Activated CD4-positive, alpha-beta memory T cell treated with anti-CD3 and anti-CD28 coated beads for 36 hours (primary cell): ENCODE measurements at regions of chr2 and their contacts with region 1.

Region 1: GRCh38 chr2:144357623-144358373 is 162.1 kb downstream of the ZEB2 start:
- DNase-seq: peak; percentile 61
- H3K4me3 Mint-ChIP-seq: peak overlapping the region; percentile 12
- H3K27ac Mint-ChIP-seq: peak overlapping the region; percentile 88
- H3K4me1 Mint-ChIP-seq: peaks cover 26% of the 10 kb centered on the region
- H3K27me3 Mint-ChIP-seq: no peaks in the 10 kb centered on the region

Region 2: DNA sequence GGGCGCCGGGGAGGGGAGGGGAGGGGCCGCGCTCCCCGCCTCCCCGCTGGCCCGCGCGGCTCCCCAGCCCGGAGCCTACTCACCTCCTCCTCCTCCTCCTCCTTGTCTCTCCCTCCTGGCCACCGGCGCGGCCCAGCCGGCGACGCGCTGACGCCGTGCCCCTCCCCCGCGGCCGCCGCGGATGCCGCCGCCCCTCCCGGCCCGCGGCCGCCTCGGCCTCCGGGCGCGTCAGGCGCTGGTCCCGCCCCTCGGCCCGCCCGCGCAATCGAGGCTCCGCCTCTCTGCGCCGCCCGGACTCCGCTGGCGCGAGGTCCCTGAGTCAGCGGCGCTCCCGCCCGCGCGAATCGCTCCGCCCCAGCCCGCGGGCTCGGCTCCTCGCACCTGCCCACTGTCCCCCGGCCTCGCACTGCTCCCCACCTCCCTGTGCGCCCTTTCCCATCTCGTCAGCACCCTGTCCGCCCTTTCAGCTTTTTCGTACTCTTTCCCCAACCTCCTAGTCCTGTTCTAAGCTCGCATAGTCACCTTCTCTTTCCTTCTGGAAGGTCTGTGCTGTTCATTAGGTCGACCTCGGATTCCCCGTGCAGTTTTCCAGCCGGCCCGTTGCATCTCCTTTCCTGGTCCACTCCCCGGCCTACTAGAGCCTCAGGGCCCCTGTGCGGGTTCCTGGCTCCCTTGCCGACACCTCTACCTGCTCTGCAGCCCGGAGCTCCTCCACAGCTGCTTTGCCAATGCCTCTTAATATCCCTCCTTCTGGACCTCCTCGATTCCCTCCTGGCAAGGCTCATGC is 25.2 kb before region 1 on chr2:
- CTCF ChIA-PET with region 1: no interaction called
- POLR2A ChIA-PET with region 1: interaction called, 5 read pairs
- intact Hi-C with region 1: loop called (anchors 1 kb)
- DNase-seq: peak; percentile 92
- H3K4me3 Mint-ChIP-seq: peak overlapping the region; percentile 91
- H3K27ac Mint-ChIP-seq: peak overlapping the region; percentile 96
- H3K4me1 Mint-ChIP-seq: peaks cover 33% of the 10 kb centered on the region
- H3K27me3 Mint-ChIP-seq: no peaks in the 10 kb centered on the region

Region 3: DNA sequence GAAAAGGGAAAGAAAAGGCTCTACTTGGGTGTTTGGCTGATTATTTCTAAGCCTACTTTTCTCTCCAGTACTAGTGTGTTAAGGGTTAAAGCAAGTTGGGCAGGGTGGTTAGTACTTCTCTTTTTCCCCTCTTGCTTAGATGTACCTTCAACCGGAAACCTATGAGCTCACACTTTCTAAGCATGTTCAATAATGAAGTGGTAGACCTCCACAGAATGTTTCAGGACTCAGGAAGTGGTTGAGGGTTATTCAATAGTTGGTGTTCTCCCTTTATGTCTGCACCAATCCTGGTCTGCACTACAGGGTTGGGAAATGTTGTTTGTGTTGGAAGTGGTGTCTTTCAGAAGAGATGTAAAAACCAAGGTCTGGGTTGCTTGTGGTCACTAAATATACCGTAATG is 25.1 kb after region 1 on chr2:
- CTCF ChIA-PET with region 1: no interaction called
- POLR2A ChIA-PET with region 1: no interaction called
- intact Hi-C with region 1: loop called (anchors 2 kb)
- DNase-seq: no peak
- H3K4me3 Mint-ChIP-seq: no peak overlapping the region
- H3K27ac Mint-ChIP-seq: no peak overlapping the region
- H3K4me1 Mint-ChIP-seq: peaks cover 29% of the 10 kb centered on the region
- H3K27me3 Mint-ChIP-seq: peaks cover 6% of the 10 kb centered on the region

Region 4: DNA sequence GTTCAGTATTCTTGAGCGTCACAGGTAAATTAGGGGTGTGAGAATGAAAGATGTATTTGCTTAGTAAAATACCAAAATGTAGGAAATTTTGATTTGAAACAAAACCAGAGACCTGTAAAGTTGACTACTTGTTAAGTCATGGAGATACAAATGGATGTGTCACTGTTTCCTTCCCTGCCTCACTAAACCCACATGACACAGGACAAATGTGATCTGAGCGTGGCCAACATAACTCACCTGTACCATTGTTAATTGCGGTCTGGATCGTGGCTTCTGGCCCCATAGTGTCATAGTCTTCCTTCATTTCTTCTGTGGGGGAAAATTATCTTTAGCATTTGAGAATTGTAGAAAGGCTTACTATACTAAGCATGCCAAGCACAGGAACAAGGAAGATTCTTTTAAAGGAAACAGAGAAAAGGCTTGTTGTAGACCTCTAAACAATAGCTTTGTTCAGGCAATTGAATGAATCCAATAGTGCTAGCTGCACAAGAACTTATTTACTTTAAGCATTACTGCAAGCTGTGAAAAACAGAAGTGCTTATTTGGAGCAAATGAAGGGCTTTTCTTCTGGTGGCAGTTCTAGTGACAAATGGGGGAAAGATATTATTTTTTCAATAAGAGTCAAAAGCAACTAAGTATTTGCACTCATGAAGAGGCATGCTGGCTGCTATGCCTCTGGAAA is 66.9 kb after region 1 on chr2:
- CTCF ChIA-PET with region 1: no interaction called
- POLR2A ChIA-PET with region 1: no interaction called
- intact Hi-C with region 1: loop called (anchors 1 kb)
- DNase-seq: peak; percentile 44
- H3K4me3 Mint-ChIP-seq: no peak overlapping the region
- H3K27ac Mint-ChIP-seq: no peak overlapping the region
- H3K4me1 Mint-ChIP-seq: peaks cover 9% of the 10 kb centered on the region
- H3K27me3 Mint-ChIP-seq: peaks cover 14% of the 10 kb centered on the region

Region 5: DNA sequence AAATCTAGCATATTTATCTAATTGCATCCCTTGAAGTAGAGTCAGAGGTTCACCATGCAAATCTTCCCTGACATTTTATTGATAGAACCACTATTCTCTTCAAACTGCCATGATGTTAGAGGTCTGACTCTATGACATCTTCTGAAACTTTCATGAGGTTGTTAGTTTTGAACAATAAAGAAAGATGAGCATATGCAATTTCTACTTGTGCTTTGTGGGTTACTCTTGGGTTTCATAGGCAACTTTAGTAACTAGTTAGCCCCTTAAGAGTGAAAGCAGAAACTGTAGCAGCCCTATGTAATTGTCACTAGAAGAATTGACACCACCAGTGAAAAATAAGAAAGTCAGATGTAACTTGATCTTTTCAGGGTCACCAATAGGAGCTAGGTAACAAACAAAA is 215.2 kb after region 1 on chr2:
- CTCF ChIA-PET with region 1: no interaction called
- POLR2A ChIA-PET with region 1: no interaction called
- intact Hi-C with region 1: loop called (anchors 5 kb)
- DNase-seq: no peak
- H3K4me3 Mint-ChIP-seq: no peak overlapping the region
- H3K27ac Mint-ChIP-seq: no peak overlapping the region
- H3K4me1 Mint-ChIP-seq: peaks cover 23% of the 10 kb centered on the region
- H3K27me3 Mint-ChIP-seq: peaks cover 6% of the 10 kb centered on the region

Region 6: DNA sequence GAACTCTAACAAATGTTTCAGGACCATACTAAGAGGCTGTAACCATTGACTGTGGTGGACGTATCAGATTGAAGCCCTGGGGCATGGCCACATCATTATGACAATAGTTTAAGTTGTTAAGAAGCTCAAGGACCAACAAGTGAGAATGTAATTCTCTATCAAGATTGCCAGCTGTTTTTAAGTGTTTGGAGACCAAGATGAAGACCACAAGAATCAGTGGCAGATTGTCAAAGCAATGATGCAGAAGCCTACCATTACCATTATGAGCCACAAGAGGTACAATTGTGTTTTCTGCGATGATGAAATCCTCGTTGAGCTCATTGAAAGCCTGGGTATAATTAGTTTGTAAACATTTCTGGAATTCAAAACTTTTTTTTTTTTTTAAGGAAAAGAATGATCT is 423.2 kb after region 1 on chr2:
- CTCF ChIA-PET with region 1: no interaction called
- POLR2A ChIA-PET with region 1: no interaction called
- intact Hi-C with region 1: no loop called
- DNase-seq: no peak
- H3K4me3 Mint-ChIP-seq: no peak overlapping the region
- H3K27ac Mint-ChIP-seq: no peak overlapping the region
- H3K4me1 Mint-ChIP-seq: no peaks in the 10 kb centered on the region
- H3K27me3 Mint-ChIP-seq: no peaks in the 10 kb centered on the region